Activated B cell treated with CpG ODN at 0.5 μM for 24 hours (primary cell): ENCODE measurements at regions of chr11 and their contacts with region 1.

Region 1: DNA sequence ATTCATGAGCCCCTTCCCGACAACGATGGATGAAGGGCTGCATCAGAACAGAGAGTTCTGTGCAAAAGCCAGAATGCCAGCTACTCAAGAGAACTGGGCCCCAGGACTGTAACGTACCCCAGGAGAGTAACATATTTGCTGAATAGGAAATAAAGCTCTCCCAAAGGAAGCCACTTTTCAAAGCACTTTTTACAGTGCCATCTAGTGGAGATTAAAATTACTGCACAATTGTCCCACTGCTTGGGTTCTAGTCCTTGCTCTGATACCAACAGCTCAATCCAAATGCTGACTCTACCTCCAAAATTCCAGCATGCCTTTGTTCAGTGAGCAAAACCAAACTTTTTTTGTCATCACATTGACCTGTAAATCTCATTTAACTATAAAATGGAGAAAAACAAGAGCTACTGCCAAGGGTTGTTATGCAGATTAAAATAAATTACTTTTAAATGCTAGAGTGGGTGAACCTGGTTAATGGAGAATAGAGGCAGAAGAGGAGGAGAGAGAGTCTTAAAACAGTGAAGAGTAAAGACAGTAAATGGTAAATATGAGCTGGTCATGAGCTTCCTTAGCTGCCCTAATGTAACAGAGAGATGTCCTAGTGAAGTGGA is 87.6 kb upstream of the FSHB start:
- DNase-seq: no peak
- ATAC-seq: no peak
- H3K4me3 Mint-ChIP-seq: no peak overlapping the region
- H3K27ac Mint-ChIP-seq: no peak overlapping the region
- H3K4me1 Mint-ChIP-seq: no peaks in the 10 kb centered on the region
- H3K27me3 Mint-ChIP-seq: peaks cover 2% of the 10 kb centered on the region
- CTCF ChIP-seq: peak; percentile 95

Region 2: DNA sequence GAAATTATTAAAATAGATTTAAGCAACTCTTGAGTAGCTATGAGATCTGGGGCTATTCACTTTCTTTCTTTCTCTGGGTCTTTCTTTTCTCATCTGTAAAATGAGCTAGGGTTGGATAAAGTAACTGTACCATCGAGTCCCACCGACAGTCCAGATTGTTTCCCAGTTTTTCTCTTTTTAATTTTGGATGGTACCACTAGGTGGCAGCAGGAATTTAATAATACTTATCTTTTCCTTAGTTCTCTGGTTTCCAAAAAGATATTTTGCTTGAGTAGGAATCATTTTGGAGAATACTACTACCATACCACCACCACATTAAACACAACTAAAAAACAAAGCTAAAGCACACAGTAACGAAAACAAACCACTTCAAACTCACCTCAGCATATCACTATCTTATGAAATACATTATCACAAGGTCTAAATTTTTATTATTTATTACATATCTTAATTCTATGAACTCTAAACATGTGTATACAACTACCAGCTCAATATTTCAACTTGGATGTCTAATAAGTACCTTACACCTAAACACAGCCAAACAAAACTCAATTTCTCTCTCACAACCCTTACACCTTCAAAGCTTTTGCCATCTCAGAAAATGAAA is 710.4 kb before region 1 on chr11:
- CTCF ChIA-PET with region 1: interaction called, 3 read pairs
- POLR2A ChIA-PET with region 1: no interaction called
- intact Hi-C with region 1: loop called (anchors 5 kb)
- DNase-seq: no peak
- ATAC-seq: no peak
- H3K4me3 Mint-ChIP-seq: no peak overlapping the region
- H3K27ac Mint-ChIP-seq: no peak overlapping the region
- H3K4me1 Mint-ChIP-seq: no peaks in the 10 kb centered on the region
- H3K27me3 Mint-ChIP-seq: no peaks in the 10 kb centered on the region
- CTCF ChIP-seq: no peak

Region 3: GRCh38 chr11:30128269-30128932 is 14.8 kb before region 1 on chr11:
- CTCF ChIA-PET with region 1: interaction called, 34 read pairs
- POLR2A ChIA-PET with region 1: no interaction called
- intact Hi-C with region 1: no loop called
- DNase-seq: no peak
- ATAC-seq: no peak
- H3K4me3 Mint-ChIP-seq: no peak overlapping the region
- H3K27ac Mint-ChIP-seq: no peak overlapping the region
- H3K4me1 Mint-ChIP-seq: no peaks in the 10 kb centered on the region
- H3K27me3 Mint-ChIP-seq: peaks cover 2% of the 10 kb centered on the region
- CTCF ChIP-seq: no peak

Region 4: GRCh38 chr11:30155428-30155827 is 12.2 kb after region 1 on chr11:
- CTCF ChIA-PET with region 1: interaction called, 10 read pairs
- POLR2A ChIA-PET with region 1: no interaction called
- intact Hi-C with region 1: no loop called
- DNase-seq: no peak
- ATAC-seq: no peak
- H3K4me3 Mint-ChIP-seq: no peak overlapping the region
- H3K27ac Mint-ChIP-seq: no peak overlapping the region
- H3K4me1 Mint-ChIP-seq: no peaks in the 10 kb centered on the region
- H3K27me3 Mint-ChIP-seq: peaks cover 2% of the 10 kb centered on the region
- CTCF ChIP-seq: no peak

Region 5: DNA sequence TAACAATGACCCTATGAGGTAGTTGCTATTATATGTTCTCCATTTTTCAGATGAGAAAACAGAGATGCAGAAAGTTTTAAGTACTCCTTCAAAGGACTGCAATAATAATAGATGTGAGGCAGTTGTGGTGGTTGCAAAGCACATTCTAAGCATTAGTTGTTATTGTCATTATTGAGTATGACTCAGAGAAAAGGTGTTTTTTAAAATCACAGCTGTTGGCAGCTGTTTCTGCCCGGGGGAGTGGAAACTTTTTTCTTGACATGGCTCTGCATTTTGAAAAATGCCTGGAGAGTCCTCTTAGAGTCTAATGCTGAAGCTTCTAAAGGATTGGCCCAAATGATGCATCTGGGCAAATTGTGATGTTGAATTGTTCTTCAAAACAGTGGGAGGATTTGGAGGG is 687.5 kb after region 1 on chr11:
- CTCF ChIA-PET with region 1: no interaction called
- POLR2A ChIA-PET with region 1: no interaction called
- intact Hi-C with region 1: no loop called
- DNase-seq: no peak
- ATAC-seq: no peak
- H3K4me3 Mint-ChIP-seq: no peak overlapping the region
- H3K27ac Mint-ChIP-seq: no peak overlapping the region
- H3K4me1 Mint-ChIP-seq: no peaks in the 10 kb centered on the region
- H3K27me3 Mint-ChIP-seq: no peaks in the 10 kb centered on the region
- CTCF ChIP-seq: no peak